Caki2 (cell line): ENCODE measurements at regions of chr19 and their contacts with region 1.

Region 1: GRCh38 chr19:38142176-38143035 is 81.6 kb downstream of the DPF1 start:
- DNase-seq: no peak

Region 2: DNA sequence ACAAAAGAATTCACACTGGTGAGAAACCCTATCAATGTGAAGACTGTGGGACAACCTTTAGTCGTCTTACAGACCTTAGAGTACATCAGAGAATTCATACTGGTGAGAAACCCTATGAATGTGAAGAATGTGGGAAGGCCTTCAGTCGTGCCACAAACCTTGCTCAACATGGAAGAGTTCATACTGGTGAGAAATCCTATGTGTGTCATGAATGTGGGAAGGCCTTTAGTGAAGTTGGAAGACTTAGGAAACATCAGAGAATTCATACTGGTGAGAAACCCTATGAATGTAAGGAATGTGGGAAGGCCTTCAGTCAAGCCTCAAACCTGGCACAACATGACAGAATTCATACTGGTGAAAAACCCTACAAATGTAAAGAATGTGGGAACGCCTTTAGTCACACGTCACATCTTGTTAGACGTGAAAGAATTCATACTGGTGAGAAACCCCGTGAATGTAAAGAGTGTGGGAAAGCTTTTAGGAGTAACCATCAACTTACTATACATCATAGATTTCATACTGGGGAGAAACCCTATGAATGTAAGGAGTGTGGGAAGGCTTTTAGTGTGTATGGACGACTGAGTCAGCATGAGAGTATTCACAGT is 339.1 kb before region 1 on chr19:
- in situ Hi-C with region 1: no loop called
- DNase-seq: no peak

Region 3: DNA sequence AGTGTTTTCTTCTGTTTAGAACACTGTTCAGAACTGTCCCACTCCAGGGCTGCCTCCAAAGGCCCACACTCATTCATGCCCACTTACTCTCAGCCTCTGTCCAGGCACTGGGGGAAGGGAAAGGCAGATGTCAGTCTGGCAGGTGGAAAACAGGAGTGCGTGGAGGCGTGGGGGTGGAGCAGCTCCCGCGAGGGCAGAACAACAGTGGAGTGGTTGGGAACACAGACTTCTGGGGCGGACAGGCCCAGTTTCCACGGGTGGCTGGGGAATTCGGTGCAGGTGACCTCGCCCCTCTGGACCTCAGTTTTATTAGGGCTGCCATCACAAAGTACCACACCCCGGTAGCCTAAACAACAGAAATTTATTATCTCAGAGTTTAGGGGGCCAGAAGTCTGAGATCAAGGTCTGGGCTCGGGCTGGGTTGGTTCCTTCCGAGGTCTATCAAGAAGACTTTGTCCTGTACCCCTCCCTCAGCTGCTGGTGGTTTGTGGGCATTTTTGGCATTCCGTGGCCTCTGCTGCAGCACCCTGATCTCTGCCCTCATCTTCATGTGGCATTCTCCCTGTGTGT is 175.7 kb before region 1 on chr19:
- in situ Hi-C with region 1: no loop called
- DNase-seq: no peak

Region 4: DNA sequence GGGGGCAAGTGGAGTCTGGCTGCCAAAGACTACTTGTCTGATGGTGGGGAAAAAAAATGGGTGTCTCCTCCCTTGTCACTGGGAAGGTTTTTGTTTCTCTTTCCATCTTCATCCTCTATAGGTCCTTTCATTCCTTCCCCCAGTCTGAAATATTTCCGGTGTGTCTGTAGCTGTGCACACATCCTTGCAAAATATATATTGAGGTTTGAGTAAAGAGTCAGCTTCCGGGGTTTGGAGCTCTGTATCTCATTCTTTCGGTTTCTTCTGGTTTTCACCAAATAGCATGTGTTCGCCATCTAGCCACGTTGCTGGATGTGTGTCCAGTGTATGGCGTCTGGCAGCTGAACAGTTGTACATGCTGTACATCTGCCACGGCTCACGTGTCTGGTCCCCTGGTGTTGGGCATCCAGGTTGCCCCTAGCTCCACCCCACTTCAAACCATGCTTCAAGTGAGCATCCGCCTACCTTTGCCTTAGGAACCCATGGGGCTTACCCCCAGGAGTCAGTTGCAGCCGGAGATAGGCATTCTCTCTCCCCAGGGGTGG is 93.2 kb before region 1 on chr19:
- in situ Hi-C with region 1: loop called (anchors 25 kb)
- DNase-seq: no peak

Region 5: GRCh38 chr19:38095411-38096308 is 46.7 kb before region 1 on chr19:
- in situ Hi-C with region 1: no loop called
- DNase-seq: peak; percentile 63